ENCODE measurements at regions of chr13 and their contacts with region 1.

Region 1: GRCh38 chr13:48769107-48769704 is 115.5 kb downstream of the CYSLTR2 start:
- DNase-seq: peak; percentile 60
- H3K4me3 ChIP-seq: peak overlapping the region in 1 of 2 experiments; percentile 10; a peak in 1 of 4 replicates
- H3K27ac ChIP-seq: no peak overlapping the region
- H3K4me1 ChIP-seq: no peaks in the 10 kb centered on the region; a peak in 2 of 4 replicates
- H3K27me3 ChIP-seq: no peaks in the 10 kb centered on the region
- CTCF ChIP-seq: peak; percentile 99
- EP300 ChIP-seq: no peak
- RAD21 ChIP-seq: peak; percentile 100

Region 2: GRCh38 chr13:48126944-48127830 is 642.0 kb before region 1 on chr13:
- CTCF ChIA-PET with region 1: interaction called, 36 read pairs
- POLR2A ChIA-PET with region 1: no interaction called
- DNase-seq: peak; percentile 67
- H3K4me3 ChIP-seq: no peak overlapping the region
- H3K27ac ChIP-seq: peak overlapping the region in 1 of 2 experiments; percentile 23; a peak in 1 of 4 replicates
- H3K4me1 ChIP-seq: no peaks in the 10 kb centered on the region; a peak in 1 of 4 replicates
- H3K27me3 ChIP-seq: no peaks in the 10 kb centered on the region
- CTCF ChIP-seq: peak; percentile 82
- EP300 ChIP-seq: no peak
- RAD21 ChIP-seq: peak; percentile 76

Region 3: DNA sequence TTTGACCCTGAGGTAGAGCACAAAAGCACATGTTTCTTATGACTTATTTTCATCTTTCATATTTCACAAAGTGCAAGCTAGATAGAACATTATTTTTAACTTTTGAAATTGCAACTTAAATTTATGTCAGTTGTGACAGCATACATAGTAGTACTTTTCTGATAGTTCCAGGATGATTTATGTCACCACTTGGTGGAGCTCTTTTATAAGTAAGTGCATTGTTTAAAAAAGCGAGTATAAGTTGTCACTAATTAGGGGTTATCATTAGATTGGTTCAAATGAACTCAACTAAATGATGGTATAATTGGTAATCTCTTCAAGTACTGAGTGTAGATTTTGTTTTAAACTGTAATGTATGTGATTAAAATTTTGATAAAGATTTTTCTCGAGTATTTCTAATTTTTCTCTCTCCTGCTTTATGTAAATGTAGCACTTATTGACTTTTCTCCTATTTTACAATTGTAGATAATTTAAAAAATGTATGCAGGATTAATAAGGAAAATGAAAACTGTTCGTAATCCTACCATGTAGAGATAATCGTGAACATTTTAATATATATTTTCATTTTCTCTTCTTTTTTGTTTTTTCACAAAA is 434.6 kb before region 1 on chr13:
- CTCF ChIA-PET with region 1: interaction called, 11 read pairs
- POLR2A ChIA-PET with region 1: no interaction called
- DNase-seq: peak; percentile 15
- H3K4me3 ChIP-seq: no peak overlapping the region
- H3K27ac ChIP-seq: no peak overlapping the region
- H3K4me1 ChIP-seq: no peaks in the 10 kb centered on the region; a peak in 1 of 4 replicates
- H3K27me3 ChIP-seq: no peaks in the 10 kb centered on the region
- CTCF ChIP-seq: peak; percentile 71
- EP300 ChIP-seq: no peak
- RAD21 ChIP-seq: peak; percentile 69

Region 4: GRCh38 chr13:48580185-48580803 is 188.9 kb before region 1 on chr13:
- CTCF ChIA-PET with region 1: interaction called, 30 read pairs
- POLR2A ChIA-PET with region 1: no interaction called
- DNase-seq: peak; percentile 45
- H3K4me3 ChIP-seq: peak overlapping the region in 1 of 2 experiments; percentile 24; a peak in 1 of 4 replicates
- H3K27ac ChIP-seq: no peak overlapping the region
- H3K4me1 ChIP-seq: no peaks in the 10 kb centered on the region; a peak in 1 of 4 replicates
- H3K27me3 ChIP-seq: no peaks in the 10 kb centered on the region
- CTCF ChIP-seq: peak; percentile 87
- EP300 ChIP-seq: no peak
- RAD21 ChIP-seq: peak; percentile 87

Region 5: DNA sequence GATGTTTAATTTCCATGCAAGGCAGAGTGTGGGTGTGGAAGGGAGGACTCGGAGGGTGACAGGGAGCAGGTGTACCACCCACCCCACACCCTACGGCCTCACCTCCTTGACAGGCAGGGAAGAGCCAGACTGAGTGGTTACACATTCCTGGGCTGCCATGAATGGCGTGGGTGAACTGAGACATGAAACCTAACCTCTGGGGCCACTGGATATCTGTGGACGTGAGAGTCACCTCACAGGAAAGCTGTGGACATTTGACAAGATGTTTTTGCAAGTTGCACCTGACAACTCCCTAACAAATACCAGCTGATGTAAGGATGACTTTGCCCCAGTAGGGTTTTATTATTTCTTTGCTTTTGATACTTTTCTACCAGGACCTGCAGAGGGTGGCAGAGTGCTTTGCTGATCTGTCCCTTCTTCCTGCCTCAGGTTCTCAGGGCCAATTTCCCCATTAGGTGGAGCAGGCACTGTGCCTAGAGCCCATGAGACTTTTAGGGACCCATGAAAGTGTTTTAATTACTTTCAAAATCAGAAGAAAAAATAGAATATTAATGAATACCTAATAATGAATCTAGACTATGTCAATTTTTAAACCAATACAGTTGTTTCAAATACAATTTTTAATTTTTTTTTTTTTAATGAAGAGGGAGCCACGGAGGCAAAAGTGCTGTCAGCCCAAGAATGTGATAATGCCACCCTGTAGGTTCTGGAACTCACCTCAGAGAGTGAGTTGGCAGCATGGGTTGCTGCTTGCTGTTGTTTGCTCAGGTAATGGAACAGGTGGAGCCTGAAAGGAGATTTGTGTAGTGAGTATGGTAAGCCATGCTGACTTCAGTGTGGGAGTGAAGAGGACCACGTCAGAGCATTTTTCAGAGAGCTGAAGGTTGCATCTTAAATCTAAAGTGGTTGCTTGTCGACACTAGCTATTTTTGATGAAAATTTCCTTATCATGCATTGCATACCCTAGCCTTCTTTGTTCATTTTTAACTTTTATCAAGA is 173.5 kb before region 1 on chr13:
- CTCF ChIA-PET with region 1: interaction called, 102 read pairs
- POLR2A ChIA-PET with region 1: no interaction called
- DNase-seq: peak; percentile 48
- H3K4me3 ChIP-seq: no peak overlapping the region
- H3K27ac ChIP-seq: no peak overlapping the region
- H3K4me1 ChIP-seq: no peaks in the 10 kb centered on the region
- H3K27me3 ChIP-seq: no peaks in the 10 kb centered on the region
- CTCF ChIP-seq: peak; percentile 80
- EP300 ChIP-seq: no peak
- RAD21 ChIP-seq: peak; percentile 91

Region 6: DNA sequence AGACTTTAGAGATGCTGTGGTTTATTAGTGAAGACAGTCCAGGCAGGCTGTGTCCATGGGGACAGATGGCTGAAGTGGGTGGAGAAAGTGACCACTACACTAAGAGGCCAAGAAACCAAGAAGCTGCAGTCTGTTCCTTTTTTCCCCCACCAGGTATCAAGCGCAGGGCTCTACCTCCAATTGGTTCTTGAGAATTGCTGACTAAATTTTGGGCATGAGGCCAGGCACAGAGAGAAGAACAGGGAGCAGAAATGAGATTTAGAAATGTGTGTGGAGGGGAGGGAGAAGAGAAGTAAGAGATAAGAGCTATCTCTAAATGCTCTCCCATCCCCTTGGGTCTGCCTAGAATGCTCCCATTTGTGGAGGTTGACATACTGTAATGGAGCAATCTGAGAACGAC is 127.8 kb before region 1 on chr13:
- CTCF ChIA-PET with region 1: no interaction called
- POLR2A ChIA-PET with region 1: no interaction called
- DNase-seq: no peak
- H3K4me3 ChIP-seq: no peak overlapping the region
- H3K27ac ChIP-seq: no peak overlapping the region
- H3K4me1 ChIP-seq: no peaks in the 10 kb centered on the region
- H3K27me3 ChIP-seq: no peaks in the 10 kb centered on the region
- CTCF ChIP-seq: no peak
- EP300 ChIP-seq: no peak
- RAD21 ChIP-seq: no peak

Region 7: DNA sequence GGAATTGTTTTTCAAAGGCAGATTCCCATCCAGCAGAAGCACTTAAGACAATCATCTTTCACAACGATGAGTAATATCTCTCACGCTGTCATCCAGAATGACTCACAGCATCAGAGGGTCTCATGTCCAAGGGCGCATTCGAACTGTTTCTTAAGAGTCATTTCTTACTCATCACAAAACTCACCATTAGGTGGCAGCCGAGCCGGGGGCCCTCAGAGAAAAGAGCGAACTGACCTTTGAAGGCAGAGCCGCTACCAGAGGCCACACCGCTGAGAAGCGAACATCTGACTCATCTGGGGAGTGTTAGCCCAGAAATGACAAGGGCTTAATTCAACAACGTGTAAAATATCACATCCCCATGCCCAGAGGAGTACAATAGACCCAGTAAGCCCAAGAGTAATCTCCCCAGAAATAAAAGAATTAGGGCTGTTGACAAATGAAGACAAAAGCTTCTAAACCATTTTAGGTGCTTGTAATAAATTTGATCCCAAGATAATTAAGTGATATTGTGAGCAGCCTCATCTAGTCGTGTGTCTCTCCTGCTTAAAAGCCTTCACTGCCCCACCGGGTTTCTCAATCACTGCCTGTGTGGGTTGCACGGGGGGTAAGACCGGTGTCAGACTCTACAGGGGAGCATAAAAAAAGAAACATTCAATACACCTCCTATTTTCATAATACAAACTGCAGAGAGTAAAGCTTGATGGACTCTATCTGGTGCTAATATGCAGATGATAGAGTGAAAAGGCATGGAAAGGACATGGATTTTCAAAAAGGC is 19.3 kb before region 1 on chr13:
- CTCF ChIA-PET with region 1: interaction called, 21 read pairs
- POLR2A ChIA-PET with region 1: no interaction called
- DNase-seq: peak; percentile 35
- H3K4me3 ChIP-seq: no peak overlapping the region
- H3K27ac ChIP-seq: peak overlapping the region in 1 of 2 experiments; percentile 87; a peak in 2 of 4 replicates
- H3K4me1 ChIP-seq: peaks cover 0 to 13% of the 10 kb centered on the region in 2 experiments; a peak in 2 of 4 replicates
- H3K27me3 ChIP-seq: no peaks in the 10 kb centered on the region
- CTCF ChIP-seq: peak; percentile 72
- EP300 ChIP-seq: peak in 1 of 2 experiments; percentile 85; a peak in 2 of 4 replicates
- RAD21 ChIP-seq: peak; percentile 49

Region 8: GRCh38 chr13:48780713-48781341 is 11.6 kb after region 1 on chr13:
- CTCF ChIA-PET with region 1: interaction called, 11 read pairs
- POLR2A ChIA-PET with region 1: no interaction called
- DNase-seq: no peak
- H3K4me3 ChIP-seq: no peak overlapping the region
- H3K27ac ChIP-seq: no peak overlapping the region
- H3K4me1 ChIP-seq: peaks cover 5 to 8% of the 10 kb centered on the region in 2 experiments
- H3K27me3 ChIP-seq: no peaks in the 10 kb centered on the region
- CTCF ChIP-seq: no peak
- EP300 ChIP-seq: no peak
- RAD21 ChIP-seq: no peak

Region 9: GRCh38 chr13:49165798-49166752 is 396.9 kb after region 1 on chr13:
- CTCF ChIA-PET with region 1: no interaction called
- POLR2A ChIA-PET with region 1: no interaction called
- DNase-seq: no peak
- H3K4me3 ChIP-seq: no peak overlapping the region
- H3K27ac ChIP-seq: no peak overlapping the region
- H3K4me1 ChIP-seq: no peaks in the 10 kb centered on the region
- H3K27me3 ChIP-seq: no peaks in the 10 kb centered on the region
- CTCF ChIP-seq: no peak
- EP300 ChIP-seq: no peak
- RAD21 ChIP-seq: no peak